PC-9 (cell line): ENCODE measurements at regions of chr11 and their contacts with region 1.

Region 1: GRCh38 chr11:285021-285893 is 3.7 kb upstream of the PGGHG start:
- DNase-seq: no peak
- H3K4me3 ChIP-seq: no peak overlapping the region
- H3K27ac ChIP-seq: no peak overlapping the region
- H3K4me1 ChIP-seq: no peaks in the 10 kb centered on the region
- H3K27me3 ChIP-seq: no peaks in the 10 kb centered on the region
- CTCF ChIP-seq: no peak

Region 2: DNA sequence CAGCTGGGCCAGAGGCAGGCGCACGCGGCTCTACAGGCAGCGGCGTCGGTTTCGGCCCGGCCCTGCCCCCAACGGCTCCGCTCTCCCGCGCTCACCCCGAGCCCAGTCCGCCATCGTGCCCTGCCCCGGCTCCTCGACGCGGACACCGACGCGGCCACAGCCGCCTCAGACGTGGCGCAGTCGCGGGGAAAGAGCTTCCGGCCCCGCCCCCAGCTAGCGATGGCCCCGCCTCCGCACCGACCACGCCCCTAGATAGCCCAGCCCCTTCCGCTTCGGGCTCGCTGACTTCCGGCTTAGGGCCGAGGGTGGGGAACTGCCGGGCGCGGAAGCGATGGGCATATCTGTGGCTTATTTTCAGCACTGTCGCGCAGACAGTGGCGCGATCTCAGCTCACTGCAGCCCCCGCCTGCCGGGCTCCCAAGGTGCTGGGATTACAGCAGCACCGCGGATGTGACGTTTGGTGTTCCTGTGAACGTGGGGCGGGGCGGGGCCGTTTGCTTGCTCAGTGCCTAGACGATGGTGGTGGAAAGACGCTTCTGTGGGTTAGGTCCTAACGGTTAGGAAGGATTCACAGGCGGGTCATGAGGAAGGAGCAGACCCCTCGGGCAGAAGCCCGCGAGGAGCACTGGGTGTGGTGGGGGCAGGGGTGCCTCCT is 77.9 kb before region 1 on chr11 and contains the starts of genes BET1L and RIC8A:
- CTCF ChIA-PET with region 1: no interaction called
- POLR2A ChIA-PET with region 1: no interaction called
- intact Hi-C with region 1: no loop called
- DNase-seq: peak; percentile 89 to 95
- H3K4me3 ChIP-seq: peak within 1 kb of the TSS; percentile 67
- H3K27ac ChIP-seq: peak within 1 kb of the TSS; percentile 89
- H3K4me1 ChIP-seq: peaks cover 11% of the 10 kb centered on the region
- H3K27me3 ChIP-seq: no peaks in the 10 kb centered on the region
- CTCF ChIP-seq: no peak
- total RNA-seq, gene BET1L: 45.7 and 60.6 TPM in 2 replicates
- total RNA-seq, gene RIC8A: 115 and 129 TPM in 2 replicates

Region 3: GRCh38 chr11:250740-251299 is 34.4 kb before region 1 on chr11:
- CTCF ChIA-PET with region 1: no interaction called
- POLR2A ChIA-PET with region 1: interaction called, 11 read pairs
- intact Hi-C with region 1: no loop called
- DNase-seq: peak in 1 of 2 experiments; percentile 51
- H3K4me3 ChIP-seq: no peak overlapping the region
- H3K27ac ChIP-seq: no peak overlapping the region
- H3K4me1 ChIP-seq: no peaks in the 10 kb centered on the region
- H3K27me3 ChIP-seq: no peaks in the 10 kb centered on the region
- CTCF ChIP-seq: peak; percentile 67

Region 4: GRCh38 chr11:363948-364761 is 78.9 kb after region 1 on chr11:
- CTCF ChIA-PET with region 1: interaction called, 14 read pairs
- POLR2A ChIA-PET with region 1: no interaction called
- intact Hi-C with region 1: no loop called
- DNase-seq: peak; percentile 76 to 85
- H3K4me3 ChIP-seq: no peak overlapping the region; the same call in 1 of the 2 replicates
- H3K27ac ChIP-seq: no peak overlapping the region
- H3K4me1 ChIP-seq: peaks cover 8% of the 10 kb centered on the region; the same call in 1 of the 2 replicates
- H3K27me3 ChIP-seq: peaks cover 15% of the 10 kb centered on the region
- CTCF ChIP-seq: peak; percentile 78

Region 5: GRCh38 chr11:554824-555472 is 269.7 kb after region 1 on chr11:
- CTCF ChIA-PET with region 1: no interaction called
- POLR2A ChIA-PET with region 1: interaction called, 10 read pairs
- intact Hi-C with region 1: no loop called
- DNase-seq: peak in 1 of 2 experiments; percentile 54
- H3K4me3 ChIP-seq: no peak overlapping the region
- H3K27ac ChIP-seq: no peak overlapping the region
- H3K4me1 ChIP-seq: no peaks in the 10 kb centered on the region
- H3K27me3 ChIP-seq: no peaks in the 10 kb centered on the region
- CTCF ChIP-seq: peak; percentile 48; the same call in 1 of the 2 replicates